Dendritic cell treated with granulocyte-macrophage colony-stimulating factor and Interleukin-4, amounts not matched to agents 40 ng/mL and 50 ng/mL, for 4 days (primary cell): ENCODE measurements at regions of chr13 and their contacts with region 1.

Region 1: DNA sequence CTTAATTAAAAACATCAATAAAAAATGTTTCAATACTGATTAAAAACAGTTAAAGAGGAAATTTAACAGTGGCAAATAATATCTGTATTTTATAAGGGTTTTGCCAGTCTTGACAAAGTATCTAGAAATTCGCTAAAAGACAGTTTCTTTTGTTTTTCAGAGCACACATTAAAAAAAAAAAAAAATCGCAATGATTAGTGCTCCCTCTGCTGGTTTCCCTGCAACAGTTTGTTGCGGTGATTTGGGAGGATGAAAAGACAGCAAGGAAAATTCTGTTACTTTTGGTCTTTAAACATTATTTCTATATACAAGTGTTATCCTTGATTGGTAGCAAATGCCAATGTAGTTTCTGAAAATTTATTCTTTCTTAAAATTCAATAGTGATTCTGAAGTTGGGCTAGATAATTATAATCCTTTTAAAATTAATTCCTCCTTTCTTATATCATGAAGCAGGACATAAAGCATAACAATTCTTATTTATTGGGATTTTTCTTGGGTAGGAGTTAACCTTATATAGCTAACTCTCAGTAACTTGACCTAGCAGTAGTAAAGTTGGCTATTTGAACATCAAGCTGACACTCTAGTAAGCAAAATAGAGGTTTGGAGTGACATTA is 23.1 kb upstream of the SPRY2 start:
- H3K4me3 Mint-ChIP-seq: no peak overlapping the region
- H3K27ac Mint-ChIP-seq: no peak overlapping the region
- H3K4me1 Mint-ChIP-seq: no peaks in the 10 kb centered on the region
- H3K27me3 Mint-ChIP-seq: peaks cover 2% of the 10 kb centered on the region

Region 2: GRCh38 chr13:79679334-79679733 is 684.7 kb before region 1 on chr13:
- intact Hi-C with region 1: loop called (anchors 2 kb)
- H3K4me3 Mint-ChIP-seq: no peak overlapping the region
- H3K27ac Mint-ChIP-seq: no peak overlapping the region
- H3K4me1 Mint-ChIP-seq: no peaks in the 10 kb centered on the region
- H3K27me3 Mint-ChIP-seq: no peaks in the 10 kb centered on the region

Region 3: DNA sequence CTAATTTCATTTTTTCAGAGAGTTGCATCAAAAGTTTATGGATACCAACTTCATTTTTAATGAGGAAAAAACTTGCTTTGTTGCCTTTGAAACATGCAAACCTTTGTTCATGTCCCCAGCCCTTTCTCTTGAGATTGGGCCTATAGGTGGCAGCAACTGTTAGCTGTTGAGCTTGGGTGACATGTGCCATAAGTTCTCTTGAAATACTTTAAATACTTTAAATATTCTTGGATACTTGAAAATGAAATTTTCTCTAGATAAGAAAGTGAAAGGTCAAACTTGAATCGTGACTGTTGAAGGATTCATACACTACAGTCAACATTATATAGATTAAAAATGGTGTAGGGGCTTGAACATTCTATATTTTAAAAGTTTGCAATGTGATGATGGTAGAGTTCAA is 588.2 kb before region 1 on chr13:
- intact Hi-C with region 1: loop called (anchors 1 kb)
- H3K4me3 Mint-ChIP-seq: no peak overlapping the region
- H3K27ac Mint-ChIP-seq: no peak overlapping the region
- H3K4me1 Mint-ChIP-seq: peaks cover 12% of the 10 kb centered on the region
- H3K27me3 Mint-ChIP-seq: no peaks in the 10 kb centered on the region

Region 4: GRCh38 chr13:80121038-80121437 is 243.0 kb before region 1 on chr13:
- intact Hi-C with region 1: no loop called
- H3K4me3 Mint-ChIP-seq: no peak overlapping the region
- H3K27ac Mint-ChIP-seq: no peak overlapping the region
- H3K4me1 Mint-ChIP-seq: no peaks in the 10 kb centered on the region
- H3K27me3 Mint-ChIP-seq: no peaks in the 10 kb centered on the region